ENCODE measurements at regions of chr6 and their contacts with region 1.

Region 1: GRCh38 chr6:29696155-29697125 is 15.5 kb upstream of the ZFP57 start:
- H3K4me3 ChIP-seq: no peak overlapping the region
- H3K27ac ChIP-seq: no peak overlapping the region
- H3K4me1 ChIP-seq: no peaks in the 10 kb centered on the region
- CTCF ChIP-seq: peak; percentile 21

Region 2: GRCh38 chr6:29593199-29593855 is 103.1 kb before region 1 on chr6:
- CTCF ChIA-PET with region 1: no interaction called
- POLR2A ChIA-PET with region 1: no interaction called
- H3K4me3 ChIP-seq: no peak overlapping the region
- H3K27ac ChIP-seq: no peak overlapping the region
- H3K4me1 ChIP-seq: peaks cover 13% of the 10 kb centered on the region
- CTCF ChIP-seq: no peak

Region 3: DNA sequence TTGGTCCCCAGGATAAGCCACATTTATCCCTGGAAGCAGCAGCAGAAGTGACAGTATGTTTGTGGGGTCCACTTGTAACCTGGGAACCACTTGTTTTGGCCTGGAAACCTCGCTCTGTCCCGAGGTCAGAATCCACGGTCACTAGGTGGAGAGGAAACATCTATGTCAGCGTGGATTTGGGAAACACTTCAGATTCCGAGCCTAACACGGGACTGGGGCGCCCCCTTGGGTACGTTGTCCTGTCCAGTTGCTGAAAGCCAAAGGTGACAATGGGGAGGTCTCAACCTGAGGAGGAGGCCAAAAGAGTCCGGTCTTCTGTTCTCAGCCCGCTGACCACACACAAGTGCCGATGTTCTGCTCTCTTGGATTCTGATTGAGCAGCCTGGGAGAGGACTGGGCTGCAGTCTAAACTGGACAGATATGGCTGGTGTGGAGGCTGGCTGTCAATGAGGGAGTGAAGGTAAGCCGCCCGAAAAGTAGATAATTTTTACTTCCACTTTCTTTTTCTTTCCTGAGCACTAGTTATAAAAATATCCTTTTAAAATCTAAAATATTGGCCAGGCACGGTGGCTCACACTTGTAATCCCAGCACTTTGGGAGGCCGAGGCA is 10.6 kb before region 1 on chr6:
- CTCF ChIA-PET with region 1: interaction called, 30 read pairs
- POLR2A ChIA-PET with region 1: no interaction called
- H3K4me3 ChIP-seq: no peak overlapping the region
- H3K27ac ChIP-seq: no peak overlapping the region
- H3K4me1 ChIP-seq: no peaks in the 10 kb centered on the region
- CTCF ChIP-seq: no peak

Region 4: DNA sequence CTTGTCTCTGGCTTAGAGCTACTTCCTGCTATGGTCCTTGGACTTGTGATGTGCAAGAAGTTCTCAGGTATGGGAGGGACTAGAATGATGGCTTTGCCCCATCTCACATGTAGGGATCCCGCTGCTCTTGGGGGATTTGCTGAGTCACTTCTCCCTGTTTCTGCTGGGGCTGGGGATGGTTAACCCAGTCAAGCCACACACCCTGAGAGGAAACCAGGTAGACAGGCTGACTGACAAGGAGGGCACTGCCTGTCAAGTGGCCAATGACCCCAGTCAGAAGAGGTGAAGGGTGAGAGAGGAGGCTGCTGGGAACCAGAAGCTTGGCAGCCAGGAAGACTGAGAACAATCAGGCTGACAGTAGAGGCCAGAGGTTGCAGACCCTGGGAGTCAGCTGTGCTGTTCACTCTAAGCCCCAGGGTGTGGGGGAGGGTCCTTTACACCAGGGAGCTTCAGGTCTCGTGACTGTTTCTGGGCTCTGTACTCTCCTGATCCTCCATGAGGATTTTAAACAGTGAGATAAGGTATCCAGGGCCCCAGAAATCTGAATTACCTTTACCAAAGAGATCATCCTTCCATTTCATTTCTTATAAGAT is 61.4 kb after region 1 on chr6:
- CTCF ChIA-PET with region 1: interaction called, 10 read pairs
- POLR2A ChIA-PET with region 1: no interaction called
- H3K4me3 ChIP-seq: no peak overlapping the region
- H3K27ac ChIP-seq: no peak overlapping the region; the same call in 1 of the 2 replicates
- H3K4me1 ChIP-seq: no peaks in the 10 kb centered on the region
- CTCF ChIP-seq: no peak

Measured in HEK293 (cell line).